ENCODE measurements at regions of chr7 and their contacts with region 1.

Region 1: DNA sequence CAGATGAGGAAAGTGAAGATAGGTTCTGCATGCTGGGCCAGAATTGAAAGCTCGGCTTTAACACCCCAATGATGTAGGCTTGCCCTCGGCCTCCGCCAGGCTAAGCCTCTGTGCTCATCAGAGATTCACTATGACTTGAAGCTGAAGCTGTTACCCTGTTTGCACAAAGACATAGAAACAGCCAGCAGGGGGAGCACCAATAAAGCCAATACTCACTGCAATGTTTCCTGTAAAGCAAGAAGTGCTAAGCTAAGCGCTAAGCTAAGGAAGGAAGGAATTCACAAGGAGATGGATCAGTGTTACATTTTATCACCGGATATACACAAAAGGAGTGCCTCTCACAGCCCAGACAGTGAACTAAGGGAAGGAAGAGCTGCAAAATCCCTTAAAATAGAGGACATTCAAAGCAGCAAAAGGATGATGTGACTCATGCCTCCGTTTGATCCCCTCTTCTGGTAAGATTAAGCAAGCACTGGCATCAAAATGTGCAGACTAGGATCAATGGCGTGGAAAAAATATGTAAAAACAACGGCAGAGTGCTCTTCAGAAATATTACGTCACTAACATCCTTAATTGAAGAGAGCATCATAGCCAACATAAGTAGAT is 153.8 kb downstream of the COBL start:
- DNase-seq: peak; percentile 22
- H3K4me3 ChIP-seq: no peak overlapping the region
- H3K27me3 ChIP-seq: peaks cover 3% of the 10 kb centered on the region
- CTCF ChIP-seq: peak; percentile 94

Region 2: DNA sequence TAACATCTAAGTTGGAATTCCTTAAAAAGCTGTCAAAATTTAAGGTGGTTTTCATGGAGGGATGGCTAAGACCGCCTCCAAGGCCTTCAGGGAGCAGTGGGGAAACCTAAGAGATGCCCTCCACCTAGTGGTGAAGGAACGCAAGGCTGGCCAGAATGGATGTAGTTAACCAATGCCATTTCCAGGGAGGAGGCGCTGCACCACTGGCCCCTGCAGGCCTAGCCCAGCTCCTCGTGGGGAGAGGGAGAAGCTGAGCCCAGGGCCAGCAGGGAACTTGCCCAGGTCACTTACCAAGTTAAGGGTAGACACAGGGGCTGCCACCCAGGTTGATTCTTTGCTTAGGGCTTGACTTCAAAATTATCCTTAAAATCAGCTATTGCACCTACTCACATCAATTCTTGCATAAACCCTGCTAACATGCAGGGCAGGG is 744.7 kb before region 1 on chr7:
- CTCF ChIA-PET with region 1: interaction called, 16 read pairs
- POLR2A ChIA-PET with region 1: no interaction called
- DNase-seq: peak; percentile 14
- H3K4me3 ChIP-seq: no peak overlapping the region
- H3K27me3 ChIP-seq: peaks cover 4% of the 10 kb centered on the region
- CTCF ChIP-seq: peak; percentile 94

Region 3: GRCh38 chr7:51141451-51142003 is 21.3 kb before region 1 on chr7:
- CTCF ChIA-PET with region 1: interaction called, 38 read pairs
- POLR2A ChIA-PET with region 1: no interaction called
- DNase-seq: no peak
- H3K4me3 ChIP-seq: no peak overlapping the region
- H3K27me3 ChIP-seq: peaks cover 5% of the 10 kb centered on the region
- CTCF ChIP-seq: peak; percentile 75

Region 4: DNA sequence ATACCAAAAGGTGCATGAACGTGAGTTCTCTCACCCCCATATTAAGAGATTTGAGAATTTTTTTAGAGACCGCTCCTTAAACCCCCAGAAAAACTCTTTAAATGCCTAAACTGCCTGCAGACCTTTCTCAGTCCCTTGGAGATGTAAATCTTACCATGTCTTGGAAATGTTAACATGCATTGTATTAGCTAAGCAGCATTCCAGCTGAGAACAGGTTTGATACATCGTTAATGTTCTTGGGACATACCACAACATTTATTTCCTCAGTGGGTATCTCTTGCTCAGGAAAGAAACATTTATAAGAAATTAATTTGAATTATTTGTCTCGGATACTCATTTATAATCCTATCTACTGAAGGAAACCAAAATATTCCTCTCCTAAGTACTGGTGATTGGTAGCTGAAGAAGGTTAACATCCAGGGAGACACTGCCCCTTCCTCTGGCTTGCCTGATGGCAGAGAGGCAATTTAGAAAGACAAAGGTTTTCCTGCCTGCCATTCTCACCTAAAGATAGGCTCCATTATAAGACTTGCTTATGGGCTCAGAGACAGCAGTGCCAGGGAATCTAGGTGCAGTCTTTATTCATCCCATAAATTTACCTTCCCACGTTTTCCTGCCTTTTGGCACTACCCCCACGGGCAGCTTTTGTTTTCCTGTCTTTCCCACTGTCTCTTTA is 12.6 kb after region 1 on chr7:
- CTCF ChIA-PET with region 1: interaction called, 64 read pairs
- POLR2A ChIA-PET with region 1: no interaction called
- DNase-seq: no peak
- H3K4me3 ChIP-seq: no peak overlapping the region
- H3K27me3 ChIP-seq: no peaks in the 10 kb centered on the region
- CTCF ChIP-seq: no peak

Region 5: DNA sequence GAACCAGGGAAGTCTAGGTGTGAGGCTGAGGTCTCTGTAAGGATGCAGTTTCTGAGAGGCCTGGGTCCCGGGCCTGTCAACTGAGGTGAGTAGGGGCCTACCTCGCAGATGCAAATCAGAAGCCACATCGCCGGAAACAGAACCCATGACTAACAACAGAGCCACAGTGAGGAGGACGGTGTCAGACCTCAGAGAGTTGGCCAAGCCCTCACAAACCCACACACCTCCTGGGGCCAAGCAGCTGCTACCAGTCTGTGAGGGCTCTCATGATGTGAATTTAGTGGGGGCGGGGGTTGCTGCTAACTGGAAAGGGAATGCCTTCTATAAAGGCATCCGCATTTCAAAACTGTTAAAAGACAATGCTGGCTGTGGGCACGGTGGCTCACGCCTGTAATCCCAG is 50.8 kb after region 1 on chr7:
- CTCF ChIA-PET with region 1: no interaction called
- POLR2A ChIA-PET with region 1: no interaction called
- DNase-seq: no peak
- H3K4me3 ChIP-seq: no peak overlapping the region
- H3K27me3 ChIP-seq: no peaks in the 10 kb centered on the region
- CTCF ChIP-seq: no peak

Region 6: GRCh38 chr7:51299391-51300133 is 136.7 kb after region 1 on chr7:
- CTCF ChIA-PET with region 1: no interaction called
- POLR2A ChIA-PET with region 1: no interaction called
- DNase-seq: no peak
- H3K4me3 ChIP-seq: no peak overlapping the region
- H3K27me3 ChIP-seq: no peaks in the 10 kb centered on the region
- CTCF ChIP-seq: no peak

Region 7: GRCh38 chr7:51366930-51367613 is 204.2 kb after region 1 on chr7:
- CTCF ChIA-PET with region 1: interaction called, 19 read pairs
- POLR2A ChIA-PET with region 1: no interaction called
- DNase-seq: no peak
- H3K4me3 ChIP-seq: no peak overlapping the region
- H3K27me3 ChIP-seq: no peaks in the 10 kb centered on the region
- CTCF ChIP-seq: peak; percentile 57

Measured in BJ (cell line).